ENCODE measurements at regions of chr18 and their contacts with region 1.

Region 1: DNA sequence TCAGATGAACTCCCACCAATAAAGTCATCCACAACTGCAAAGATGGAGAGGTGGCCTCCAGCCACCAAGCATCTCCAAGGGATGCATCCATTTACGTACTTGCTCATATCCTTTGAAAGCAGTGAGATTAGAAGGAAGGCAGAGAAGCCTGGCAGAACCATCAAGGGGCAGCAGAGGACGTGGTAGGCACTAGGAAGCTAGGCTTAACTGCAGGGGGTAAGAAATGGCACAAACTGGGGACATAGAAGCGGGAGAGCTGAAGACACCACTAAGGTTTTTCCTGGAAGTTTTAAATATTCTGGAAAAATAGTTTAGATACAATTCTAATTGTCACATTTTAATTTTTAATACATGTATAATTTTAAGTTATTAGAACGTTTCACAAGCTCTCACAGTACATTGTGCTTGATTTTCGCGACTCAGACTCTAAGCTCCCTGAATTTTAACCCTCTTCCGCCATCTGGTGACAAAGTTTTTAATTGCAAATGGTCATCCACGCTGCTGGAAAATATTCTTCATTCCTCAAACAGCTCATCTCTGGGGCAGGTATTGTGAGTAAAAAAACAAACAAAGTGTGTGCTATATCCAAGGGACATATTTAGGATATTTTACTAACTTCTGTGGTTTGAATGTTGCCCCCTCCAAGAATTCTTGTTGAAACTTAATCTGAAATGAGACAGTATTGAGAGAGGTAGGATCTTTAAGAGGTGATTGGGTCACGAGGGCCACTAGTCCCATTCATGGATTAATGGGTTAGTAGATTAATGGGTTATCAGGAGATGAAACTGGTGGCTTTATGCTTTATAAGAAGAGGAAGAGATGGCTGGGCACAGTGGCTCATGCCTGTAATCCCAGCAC is 1.6 kb upstream of the PSTPIP2 start:
- DNase-seq: peak; percentile 75
- ATAC-seq: peak; percentile 45
- H3K4me3 Mint-ChIP-seq: no peak overlapping the region
- H3K27ac Mint-ChIP-seq: no peak overlapping the region
- H3K4me1 Mint-ChIP-seq: peaks cover 32% of the 10 kb centered on the region
- H3K27me3 Mint-ChIP-seq: no peaks in the 10 kb centered on the region

Region 2: GRCh38 chr18:45722899-45723298 is 350.8 kb before region 1 on chr18:
- CTCF ChIA-PET with region 1: interaction called, 11 read pairs
- POLR2A ChIA-PET with region 1: no interaction called
- DNase-seq: peak; percentile 81
- ATAC-seq: peak; percentile 90
- H3K4me3 Mint-ChIP-seq: no peak overlapping the region
- H3K27ac Mint-ChIP-seq: no peak overlapping the region
- H3K4me1 Mint-ChIP-seq: peaks cover 6% of the 10 kb centered on the region
- H3K27me3 Mint-ChIP-seq: peaks cover 6% of the 10 kb centered on the region

Region 3: DNA sequence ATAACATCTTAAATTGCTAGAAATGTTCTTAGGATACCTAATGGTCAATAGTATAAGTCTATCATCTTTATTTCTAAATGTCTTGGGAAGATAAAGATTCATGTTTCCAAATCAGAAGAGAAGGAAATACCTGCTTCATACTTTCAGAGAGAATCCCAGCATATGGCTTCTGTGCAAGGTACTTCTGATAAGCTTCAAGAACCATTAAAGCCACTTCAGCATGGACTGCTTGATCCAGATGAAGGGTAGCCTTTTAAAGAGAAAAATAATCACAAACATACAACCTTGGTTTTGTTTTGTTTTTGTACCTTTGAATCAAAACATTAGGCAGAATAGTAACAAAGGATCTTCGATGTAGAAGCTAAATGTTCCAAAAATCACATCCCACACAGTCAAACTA is 150.6 kb before region 1 on chr18:
- CTCF ChIA-PET with region 1: interaction called, 28 read pairs
- POLR2A ChIA-PET with region 1: no interaction called
- DNase-seq: no peak
- ATAC-seq: no peak
- H3K4me3 Mint-ChIP-seq: no peak overlapping the region
- H3K27ac Mint-ChIP-seq: no peak overlapping the region
- H3K4me1 Mint-ChIP-seq: no peaks in the 10 kb centered on the region
- H3K27me3 Mint-ChIP-seq: no peaks in the 10 kb centered on the region

Region 4: DNA sequence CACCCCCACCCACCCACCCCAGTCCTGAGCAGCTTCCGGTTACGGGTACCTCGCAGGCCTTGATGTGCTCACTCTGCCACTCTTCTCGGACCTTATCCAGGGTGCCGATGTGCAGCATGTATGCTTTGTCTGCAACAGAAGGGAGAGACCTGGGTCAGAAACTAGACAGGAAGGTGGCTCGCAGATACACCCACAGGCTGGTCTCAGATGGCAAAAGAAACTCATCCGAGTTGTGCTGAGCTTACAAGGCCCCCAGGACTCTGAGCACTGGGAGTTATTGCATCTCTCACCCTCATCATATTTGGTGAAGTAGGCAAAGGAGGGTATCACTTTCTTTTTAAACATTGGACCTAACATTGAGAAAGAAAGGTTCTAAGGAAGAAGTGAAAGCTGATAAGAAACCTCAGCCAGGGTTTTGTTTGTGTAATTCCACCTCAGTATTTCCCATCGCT is 76.0 kb before region 1 on chr18:
- CTCF ChIA-PET with region 1: interaction called, 29 read pairs
- POLR2A ChIA-PET with region 1: interaction called, 6 read pairs
- DNase-seq: peak; percentile 50
- ATAC-seq: peak; percentile 76
- H3K4me3 Mint-ChIP-seq: peak overlapping the region; percentile 65
- H3K27ac Mint-ChIP-seq: peak overlapping the region; percentile 91
- H3K4me1 Mint-ChIP-seq: peaks cover 36% of the 10 kb centered on the region
- H3K27me3 Mint-ChIP-seq: no peaks in the 10 kb centered on the region

Region 5: DNA sequence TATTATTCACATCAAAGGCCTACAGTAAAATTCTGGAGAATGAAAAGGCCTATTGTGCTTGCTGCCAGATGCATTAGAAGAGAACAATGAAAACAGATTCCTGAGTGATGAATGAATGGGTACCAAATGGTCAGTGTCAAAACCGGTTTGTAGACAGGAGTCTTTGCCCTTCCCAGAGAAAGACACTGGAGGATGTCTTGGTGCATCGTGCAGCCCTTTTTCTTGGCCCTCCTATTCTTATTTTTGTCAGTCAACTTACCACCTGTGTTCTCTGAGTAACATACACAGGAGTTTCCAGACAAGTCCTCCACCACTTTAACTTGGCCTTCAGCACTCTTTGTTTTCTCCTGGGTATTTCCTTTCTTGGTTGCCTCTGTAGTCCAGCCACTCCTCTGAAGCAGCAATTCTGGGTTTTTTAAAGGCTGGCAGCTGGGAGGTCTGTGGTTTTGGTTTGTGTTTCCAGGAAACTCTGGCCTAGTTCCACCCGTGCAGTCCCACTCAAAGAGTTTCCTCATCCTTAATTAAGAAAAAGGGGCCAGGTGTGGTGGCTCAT is 31.1 kb before region 1 on chr18:
- CTCF ChIA-PET with region 1: interaction called, 10 read pairs
- POLR2A ChIA-PET with region 1: interaction called, 3 read pairs
- DNase-seq: peak; percentile 66
- ATAC-seq: peak; percentile 81
- H3K4me3 Mint-ChIP-seq: peak overlapping the region; percentile 12
- H3K27ac Mint-ChIP-seq: no peak overlapping the region
- H3K4me1 Mint-ChIP-seq: peaks cover 41% of the 10 kb centered on the region
- H3K27me3 Mint-ChIP-seq: no peaks in the 10 kb centered on the region

Region 6: GRCh38 chr18:46097801-46098615 is 24.3 kb after region 1 on chr18 and contains the start of gene ATP5F1A:
- CTCF ChIA-PET with region 1: interaction called, 20 read pairs
- POLR2A ChIA-PET with region 1: interaction called, 3 read pairs
- DNase-seq: peak; percentile 91
- ATAC-seq: peak; percentile 88
- H3K4me3 Mint-ChIP-seq: peak within 1 kb of the TSS; percentile 98
- H3K27ac Mint-ChIP-seq: peak within 1 kb of the TSS; percentile 95
- H3K4me1 Mint-ChIP-seq: peaks cover 32% of the 10 kb centered on the region
- H3K27me3 Mint-ChIP-seq: no peaks in the 10 kb centered on the region
- total RNA-seq, gene ATP5F1A: 377 to 385 TPM

Region 7: DNA sequence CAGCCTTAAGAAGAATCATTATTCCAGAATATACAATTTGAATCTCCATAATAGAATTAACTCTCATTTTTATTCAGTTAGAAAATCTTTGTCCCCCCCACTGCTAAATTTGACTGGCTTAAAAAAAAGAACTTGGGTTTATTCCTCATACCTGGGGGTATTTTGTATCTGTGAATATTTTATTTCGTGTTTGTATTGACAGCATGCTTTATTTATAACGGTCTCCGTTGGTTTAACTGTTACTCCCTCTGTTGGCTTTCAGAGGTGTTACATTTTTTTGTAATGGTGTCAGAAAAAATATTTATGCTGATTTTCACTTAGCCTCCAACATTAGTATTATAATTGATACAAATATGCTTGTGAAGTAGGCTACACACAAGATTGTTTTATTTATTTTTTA is 139.6 kb after region 1 on chr18:
- CTCF ChIA-PET with region 1: no interaction called
- POLR2A ChIA-PET with region 1: no interaction called
- DNase-seq: no peak
- ATAC-seq: no peak
- H3K4me3 Mint-ChIP-seq: no peak overlapping the region
- H3K27ac Mint-ChIP-seq: no peak overlapping the region
- H3K4me1 Mint-ChIP-seq: peaks cover 69% of the 10 kb centered on the region
- H3K27me3 Mint-ChIP-seq: no peaks in the 10 kb centered on the region